SK-N-SH (cell line): ENCODE measurements at regions of chr12 and their contacts with region 1.

Region 1: DNA sequence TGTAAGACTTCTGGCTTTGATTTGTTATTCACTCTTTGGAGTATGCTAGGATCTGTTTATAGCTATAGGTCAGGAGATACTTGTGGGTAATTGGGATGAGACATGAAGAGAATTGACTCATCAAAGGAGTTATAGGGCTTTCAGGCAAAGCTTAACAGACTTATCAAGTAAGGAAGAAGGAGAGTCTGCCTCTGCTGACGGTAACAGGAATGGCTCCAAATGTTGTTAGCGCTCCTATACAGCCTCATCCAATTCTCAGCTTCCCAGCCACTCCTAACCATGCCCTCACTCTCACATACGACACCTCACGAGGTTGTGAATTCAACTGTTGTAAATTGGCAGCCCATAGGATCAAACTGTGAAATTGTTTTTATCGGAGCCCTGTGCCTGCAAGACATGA is 140.5 kb downstream of the KCNA5 start:
- DNase-seq: no peak
- H3K4me3 ChIP-seq: no peak overlapping the region
- H3K27ac ChIP-seq: no peak overlapping the region
- H3K4me1 ChIP-seq: peaks cover 0 to 2% of the 10 kb centered on the region in 2 experiments; a peak in 1 of 4 replicates
- H3K27me3 ChIP-seq: no peaks in the 10 kb centered on the region
- CTCF ChIP-seq: no peak; the same call in 1 of the 2 replicates
- EP300 ChIP-seq: no peak
- RAD21 ChIP-seq: no peak

Region 2: GRCh38 chr12:5160827-5161226 is 23.4 kb before region 1 on chr12:
- CTCF ChIA-PET with region 1: no interaction called
- POLR2A ChIA-PET with region 1: no interaction called
- DNase-seq: no peak
- H3K4me3 ChIP-seq: no peak overlapping the region
- H3K27ac ChIP-seq: no peak overlapping the region
- H3K4me1 ChIP-seq: 0 out of 4 replicates have a peak, but pooled peaks cover 0 to 6% of the 10 kb centered on the region in 2 experiments
- H3K27me3 ChIP-seq: no peaks in the 10 kb centered on the region
- CTCF ChIP-seq: no peak
- EP300 ChIP-seq: no peak
- RAD21 ChIP-seq: no peak

Region 3: GRCh38 chr12:5171701-5172100 is 12.5 kb before region 1 on chr12:
- CTCF ChIA-PET with region 1: interaction called, 11 read pairs
- POLR2A ChIA-PET with region 1: no interaction called
- DNase-seq: peak; percentile 51
- H3K4me3 ChIP-seq: peak overlapping the region in 1 of 2 experiments; percentile 54; a peak in 1 of 4 replicates
- H3K27ac ChIP-seq: no peak overlapping the region
- H3K4me1 ChIP-seq: peaks cover 8 to 17% of the 10 kb centered on the region in 2 experiments; a peak in 3 of 4 replicates
- H3K27me3 ChIP-seq: no peaks in the 10 kb centered on the region
- CTCF ChIP-seq: peak; percentile 78
- EP300 ChIP-seq: no peak
- RAD21 ChIP-seq: peak; percentile 78